ENCODE measurements at regions of chr9 and their contacts with region 1.

Region 1: GRCh38 chr9:131739980-131740648 is at the start of gene RAPGEF1:
- DNase-seq: peak; percentile 36 to 91 (median 58)
- H3K4me3 ChIP-seq: peak within 1 kb of the TSS; percentile 68 to 95 (median 83)
- H3K27ac ChIP-seq: peak within 1 kb of the TSS; percentile 82 to 93
- H3K4me1 ChIP-seq: peaks cover 3 to 28% (median 25%) of the 10 kb centered on the region in 3 donors
- H3K27me3 ChIP-seq: no peaks in the 10 kb centered on the region
- CTCF ChIP-seq: peak; percentile 99
- total RNA-seq, gene RAPGEF1: 79.7 TPM

Region 2: DNA sequence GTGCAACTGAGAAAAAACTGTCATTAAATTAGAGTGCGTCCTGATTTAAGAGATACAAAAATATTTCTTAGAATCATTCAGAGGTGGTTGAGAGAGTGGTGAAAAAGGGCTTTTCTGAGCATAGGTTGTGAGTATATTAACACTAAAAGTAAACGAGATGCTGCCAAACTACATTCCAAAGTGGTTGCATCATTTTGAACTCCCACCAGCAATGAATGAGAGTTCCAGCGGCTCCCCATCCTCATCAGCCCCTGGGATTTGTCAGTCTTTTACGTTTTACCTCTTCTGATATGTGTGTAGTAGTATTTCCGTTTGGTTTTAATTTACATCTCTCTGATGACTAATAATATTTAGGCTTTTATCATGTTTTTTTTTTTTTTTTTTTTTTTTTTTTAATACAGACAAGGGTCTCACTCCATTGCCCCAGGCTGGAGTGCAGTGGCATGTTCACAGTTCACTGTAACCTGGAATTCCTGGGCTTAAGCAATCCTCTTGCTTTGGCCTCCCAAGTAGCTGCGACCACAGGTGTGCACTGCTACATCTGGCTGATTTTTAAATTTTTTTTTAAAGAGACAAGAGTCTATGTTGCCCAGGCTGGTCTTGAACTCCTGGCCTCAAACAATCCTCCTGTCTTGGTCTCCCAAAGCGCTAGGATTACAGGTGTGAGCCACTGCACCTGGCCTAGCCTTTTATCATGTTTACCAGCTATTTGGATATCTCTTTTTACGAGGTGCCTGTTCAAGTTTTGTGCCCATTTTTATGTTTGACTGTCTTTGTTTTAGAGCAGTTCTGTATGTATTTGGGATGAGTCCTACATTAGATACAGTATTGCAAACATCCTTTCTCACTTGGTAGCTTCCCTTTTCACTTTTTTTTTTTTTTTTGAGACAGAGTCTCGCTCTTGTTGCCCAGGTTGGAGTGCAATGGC is 177.8 kb before region 1 on chr9:
- intact Hi-C with region 1: no loop called
- DNase-seq: peak in 1 of 5 donors; percentile 54
- H3K4me3 ChIP-seq: no peak overlapping the region
- H3K27ac ChIP-seq: no peak overlapping the region
- H3K4me1 ChIP-seq: no peaks in the 10 kb centered on the region
- H3K27me3 ChIP-seq: no peaks in the 10 kb centered on the region
- CTCF ChIP-seq: no peak

Region 3: GRCh38 chr9:131585375-131585774 is 154.7 kb before region 1 on chr9:
- intact Hi-C with region 1: loop called (anchors 10 kb)
- DNase-seq: no peak
- H3K4me3 ChIP-seq: no peak overlapping the region
- H3K27ac ChIP-seq: no peak overlapping the region
- H3K4me1 ChIP-seq: no peaks in the 10 kb centered on the region
- H3K27me3 ChIP-seq: no peaks in the 10 kb centered on the region
- CTCF ChIP-seq: no peak

Region 4: DNA sequence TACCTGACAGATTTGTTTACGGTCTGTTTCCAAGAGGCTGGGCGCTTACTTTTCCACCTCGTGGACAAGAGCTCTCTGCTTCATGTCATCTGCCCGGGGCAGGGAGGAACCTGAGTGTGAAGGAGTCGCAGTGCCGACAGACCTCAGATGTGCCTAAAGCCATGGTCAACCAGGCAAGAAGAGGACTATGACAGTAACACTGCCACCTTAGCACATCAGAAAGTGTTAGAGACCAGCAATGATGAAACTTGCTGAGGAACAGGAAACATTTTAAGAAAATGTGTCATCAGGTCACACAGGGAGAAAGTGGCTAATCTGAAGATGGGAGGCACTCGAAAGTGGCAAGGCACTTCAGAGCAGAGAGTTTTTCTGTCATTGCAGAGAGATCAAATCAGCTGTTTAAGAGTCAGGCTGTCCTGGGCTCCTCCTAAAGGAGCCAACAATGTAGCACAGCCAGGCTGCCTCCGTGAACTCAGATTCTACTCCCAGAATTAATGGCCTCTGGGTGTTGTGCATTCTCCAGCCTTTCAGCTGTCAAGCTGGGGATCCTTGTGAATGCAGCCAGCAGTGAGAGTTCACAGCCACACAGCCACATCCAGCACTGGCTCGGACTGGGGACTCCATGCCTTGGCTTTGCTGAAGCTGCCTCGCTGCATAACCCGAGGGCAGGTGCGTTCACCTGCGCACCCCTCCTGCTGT is 94.9 kb before region 1 on chr9:
- intact Hi-C with region 1: loop called (anchors 10 kb)
- DNase-seq: peak in 1 of 5 donors; percentile 57
- H3K4me3 ChIP-seq: no peak overlapping the region
- H3K27ac ChIP-seq: no peak overlapping the region
- H3K4me1 ChIP-seq: peaks cover 0 to 19% (median 12%) of the 10 kb centered on the region in 3 donors
- H3K27me3 ChIP-seq: no peaks in the 10 kb centered on the region
- CTCF ChIP-seq: no peak